ENCODE measurements at regions of chr19 and their contacts with region 1.

Region 1: GRCh38 chr19:15091901-15092753 is 10.1 kb downstream of the OR1I1 start:
- DNase-seq: no peak
- ATAC-seq: peak; percentile 47
- H3K4me3 Mint-ChIP-seq: no peak overlapping the region
- H3K27ac Mint-ChIP-seq: no peak overlapping the region
- H3K4me1 Mint-ChIP-seq: peaks cover 3% of the 10 kb centered on the region
- H3K27me3 Mint-ChIP-seq: peaks cover 9% of the 10 kb centered on the region
- CTCF ChIP-seq: peak; percentile 59

Region 2: DNA sequence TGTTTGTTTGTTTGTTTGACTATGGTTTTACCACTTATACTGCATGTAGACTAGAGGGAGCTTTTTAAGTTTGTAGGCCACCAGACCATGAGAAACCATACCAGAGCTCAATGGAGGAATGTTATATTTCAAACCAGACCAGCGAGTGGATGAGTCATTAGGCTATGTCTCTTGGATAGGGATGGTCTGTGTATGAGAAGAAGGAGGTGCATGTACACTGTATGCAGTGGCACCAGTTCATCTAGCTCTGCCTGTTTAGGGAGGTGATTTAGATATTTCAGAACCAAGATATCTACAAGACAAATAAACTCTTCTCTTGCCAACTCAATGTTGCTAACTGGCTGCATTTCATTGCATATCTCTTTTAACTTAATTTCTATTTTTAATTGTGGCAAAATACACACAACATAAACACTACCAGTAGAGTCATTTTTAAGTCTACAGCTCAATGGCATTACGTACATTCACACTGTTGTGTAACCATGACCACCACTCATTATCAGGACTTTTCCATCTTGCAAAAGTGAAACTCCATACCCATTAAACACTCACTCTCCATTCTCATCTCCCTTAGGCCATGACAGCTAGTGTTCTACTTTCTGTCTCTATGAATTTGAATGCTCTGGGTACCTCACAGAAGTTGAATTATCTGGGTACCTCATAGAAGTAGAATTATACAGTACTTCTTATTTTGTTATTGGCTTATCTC is 44.3 kb after region 1 on chr19:
- CTCF ChIA-PET with region 1: no interaction called
- POLR2A ChIA-PET with region 1: no interaction called
- intact Hi-C with region 1: no loop called
- DNase-seq: no peak
- ATAC-seq: no peak
- H3K4me3 Mint-ChIP-seq: no peak overlapping the region
- H3K27ac Mint-ChIP-seq: no peak overlapping the region
- H3K4me1 Mint-ChIP-seq: no peaks in the 10 kb centered on the region
- H3K27me3 Mint-ChIP-seq: peaks cover 18% of the 10 kb centered on the region
- CTCF ChIP-seq: no peak

Region 3: DNA sequence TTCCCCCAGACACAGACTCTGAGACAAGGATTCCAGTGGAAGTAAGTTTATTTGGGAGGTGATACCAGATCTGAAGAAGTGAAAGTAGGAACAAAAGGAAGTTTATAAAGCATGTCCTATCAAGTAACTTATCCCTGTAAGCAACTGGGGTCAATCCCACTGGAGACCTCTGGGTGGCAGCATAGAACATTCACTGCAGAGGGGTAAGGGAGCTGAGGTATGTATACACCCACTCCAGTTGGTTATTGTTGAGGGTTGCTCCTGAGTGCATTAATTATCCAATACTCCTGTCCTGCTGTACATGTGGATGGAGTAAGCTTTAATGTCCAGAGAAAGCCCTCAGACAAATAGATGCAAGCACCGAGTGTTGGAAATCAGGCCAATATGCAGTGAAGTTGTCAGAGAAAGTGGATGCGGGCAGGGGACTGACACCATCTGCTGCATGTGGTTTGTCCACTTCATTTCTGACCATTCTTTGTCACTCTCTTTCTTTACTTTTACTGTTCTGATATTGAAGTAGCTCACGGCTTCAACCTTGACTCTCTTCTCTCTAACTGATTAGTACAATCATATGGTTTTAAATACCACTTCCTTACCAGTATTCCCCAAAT is 62.0 kb after region 1 on chr19:
- CTCF ChIA-PET with region 1: interaction called, 37 read pairs
- POLR2A ChIA-PET with region 1: no interaction called
- intact Hi-C with region 1: loop called (anchors 1 kb)
- DNase-seq: no peak
- ATAC-seq: no peak
- H3K4me3 Mint-ChIP-seq: no peak overlapping the region
- H3K27ac Mint-ChIP-seq: no peak overlapping the region
- H3K4me1 Mint-ChIP-seq: no peaks in the 10 kb centered on the region
- H3K27me3 Mint-ChIP-seq: peaks cover 17% of the 10 kb centered on the region
- CTCF ChIP-seq: no peak